H1 (cell line): ENCODE measurements at regions of chr7 and their contacts with region 1.

Region 1: DNA sequence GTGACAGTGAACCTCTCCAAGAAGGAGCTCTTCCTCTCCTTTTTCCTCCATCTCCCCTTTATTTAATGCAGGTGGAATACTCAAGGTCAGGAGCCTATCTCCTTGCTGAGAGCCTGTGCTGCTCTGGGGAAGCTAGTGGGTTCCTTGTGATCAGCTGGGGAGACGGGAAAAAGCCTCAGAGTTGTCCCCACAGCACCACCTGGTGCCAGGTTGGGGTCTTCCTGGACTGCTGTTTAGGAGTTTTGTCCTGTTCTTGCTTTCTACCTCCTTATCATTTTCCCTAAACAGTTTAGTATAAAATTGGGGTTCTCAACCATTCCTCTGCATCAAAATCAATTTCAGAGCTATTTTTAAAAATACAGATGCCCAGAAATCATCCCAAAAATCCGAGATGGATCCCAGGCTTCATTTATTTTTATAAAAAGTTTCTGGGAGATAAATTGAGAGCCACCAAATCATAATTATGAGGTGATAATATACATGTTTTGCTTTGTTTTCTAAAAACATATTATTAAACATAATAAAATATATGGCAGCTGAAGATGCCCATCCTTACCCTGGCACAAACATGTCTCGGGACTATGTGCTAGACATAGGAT is 44.3 kb downstream of the MACC1 start:
- DNase-seq: peak; percentile 60 to 84
- H3K4me3 ChIP-seq: no peak overlapping the region
- H3K27ac ChIP-seq: no peak overlapping the region
- H3K4me1 ChIP-seq: no peaks in the 10 kb centered on the region
- H3K27me3 ChIP-seq: no peaks in the 10 kb centered on the region
- CTCF ChIP-seq: peak; percentile 80 to 87 (median 83)
- EP300 ChIP-seq: no peak
- POLR2A ChIP-seq: no peak
- RAD21 ChIP-seq: peak; percentile 94

Region 2: DNA sequence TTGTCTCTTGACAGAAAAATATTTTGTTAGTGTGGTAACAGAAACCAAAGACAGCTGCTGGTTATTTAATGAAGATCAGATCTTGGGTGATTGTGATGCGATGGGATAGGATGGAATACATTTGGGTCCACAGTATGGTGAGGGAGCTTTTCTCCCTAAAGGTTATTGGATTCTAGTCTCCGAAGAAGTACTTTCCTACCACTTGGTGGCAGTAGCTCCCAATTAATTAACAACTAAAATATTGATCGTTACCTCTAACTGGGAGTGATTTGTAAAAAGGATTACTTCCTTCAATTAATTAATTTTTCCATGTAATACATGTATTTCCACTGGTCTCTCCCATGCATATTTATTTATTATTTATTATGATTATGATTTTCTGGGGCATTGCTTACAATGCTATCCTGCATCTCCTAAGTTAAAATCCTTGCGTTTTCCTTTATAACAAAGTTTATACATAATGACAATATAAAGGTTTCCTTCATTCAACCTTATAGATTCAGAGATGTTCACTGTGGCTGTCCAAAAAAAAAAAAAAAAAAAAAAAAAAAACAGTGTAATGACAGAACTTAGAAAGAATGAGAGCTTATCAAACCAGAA is 425.0 kb before region 1 on chr7:
- CTCF ChIA-PET with region 1: interaction called, 45 read pairs
- POLR2A ChIA-PET with region 1: no interaction called
- DNase-seq: no peak
- H3K4me3 ChIP-seq: no peak overlapping the region
- H3K27ac ChIP-seq: no peak overlapping the region
- H3K4me1 ChIP-seq: no peaks in the 10 kb centered on the region
- H3K27me3 ChIP-seq: no peaks in the 10 kb centered on the region
- CTCF ChIP-seq: peak in 2 of 3 experiments; percentile 45 to 61; a peak in 2 of 4 replicates
- EP300 ChIP-seq: no peak
- POLR2A ChIP-seq: no peak
- RAD21 ChIP-seq: peak; percentile 74 to 77

Region 3: DNA sequence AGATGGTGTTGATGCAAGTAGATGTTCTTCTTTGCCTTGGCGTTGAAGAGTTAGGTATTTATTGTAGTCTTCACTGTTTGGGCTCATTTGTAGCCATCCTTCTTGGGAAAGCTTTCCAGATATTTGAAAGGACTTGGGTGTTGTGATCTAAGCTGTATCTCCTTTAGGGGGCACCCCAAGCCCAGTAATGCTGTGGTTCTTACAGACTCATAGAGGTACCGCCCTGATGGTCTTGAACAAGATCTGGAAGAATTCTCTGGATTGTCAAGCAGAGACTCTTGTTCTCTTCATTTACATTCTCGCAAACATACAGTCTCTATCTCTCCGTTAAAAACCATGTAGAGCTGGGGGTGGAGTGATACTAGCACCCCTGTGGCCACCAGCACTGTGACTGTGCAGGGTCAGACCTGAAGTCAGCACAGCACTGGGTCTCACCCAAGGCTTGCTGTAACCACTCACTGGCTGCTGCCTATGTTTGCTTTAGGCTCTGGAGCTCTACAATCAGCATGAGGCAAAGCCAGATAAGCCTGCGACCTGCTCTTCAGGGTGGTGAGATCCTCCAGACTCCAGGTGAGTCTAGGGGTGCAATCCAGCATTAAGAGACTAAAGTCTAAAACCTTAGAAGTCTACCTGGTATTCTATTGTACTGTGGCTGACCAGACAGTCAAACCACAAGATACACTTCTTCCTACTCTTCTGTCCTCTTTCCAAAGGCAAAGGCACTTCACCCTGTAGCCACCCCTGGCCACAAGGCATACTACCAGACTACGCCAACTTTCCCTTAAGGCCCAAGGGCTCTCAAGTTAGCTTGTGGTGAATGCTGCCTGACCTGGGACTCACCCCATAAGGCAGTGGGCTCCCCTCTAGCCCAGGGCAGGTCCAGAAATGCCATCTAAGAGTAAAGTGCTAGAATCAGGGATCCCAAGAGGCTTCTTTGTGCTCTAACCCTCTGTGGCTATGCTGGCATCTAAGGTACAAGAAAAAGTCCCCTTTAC is 189.7 kb before region 1 on chr7:
- CTCF ChIA-PET with region 1: interaction called, 102 read pairs
- POLR2A ChIA-PET with region 1: interaction called, 3 read pairs
- DNase-seq: peak in 1 of 2 experiments; percentile 65
- H3K4me3 ChIP-seq: no peak overlapping the region
- H3K27ac ChIP-seq: no peak overlapping the region
- H3K4me1 ChIP-seq: peaks cover 0 to 8% (median 3%) of the 10 kb centered on the region in 4 experiments; a peak in 1 of 7 replicates
- H3K27me3 ChIP-seq: no peaks in the 10 kb centered on the region
- CTCF ChIP-seq: peak in 2 of 3 experiments; percentile 58 to 71; a peak in 3 of 4 replicates
- EP300 ChIP-seq: no peak
- POLR2A ChIP-seq: peak in 1 of 2 experiments; percentile 33; a peak in 1 of 3 replicates
- RAD21 ChIP-seq: peak; percentile 87 to 90

Region 4: DNA sequence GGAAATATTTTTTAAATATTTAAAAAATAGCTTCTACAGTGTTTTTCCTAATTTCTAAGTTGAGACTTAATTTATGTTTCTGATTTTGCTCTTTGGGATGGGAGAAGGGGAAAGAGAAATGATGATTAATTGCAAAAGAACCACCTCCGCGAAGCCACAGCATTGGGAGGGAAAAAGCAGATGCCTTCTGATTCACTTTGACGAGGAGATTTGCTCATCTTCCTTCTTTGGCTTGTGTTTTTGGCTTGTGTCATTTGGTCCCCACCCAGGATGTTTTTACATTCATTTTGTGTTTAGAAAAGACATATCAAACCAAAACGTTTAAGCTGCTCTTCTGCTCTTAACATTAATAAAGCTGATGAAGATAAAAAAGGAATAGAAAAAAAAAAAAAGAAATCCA is 77.4 kb before region 1 on chr7:
- CTCF ChIA-PET with region 1: no interaction called
- POLR2A ChIA-PET with region 1: no interaction called
- DNase-seq: no peak
- H3K4me3 ChIP-seq: no peak overlapping the region
- H3K27ac ChIP-seq: no peak overlapping the region
- H3K4me1 ChIP-seq: peaks cover 0 to 13% (median under 1%) of the 10 kb centered on the region in 4 experiments; a peak in 4 of 7 replicates
- H3K27me3 ChIP-seq: no peaks in the 10 kb centered on the region
- CTCF ChIP-seq: no peak
- EP300 ChIP-seq: no peak
- POLR2A ChIP-seq: no peak
- RAD21 ChIP-seq: no peak

Region 5: DNA sequence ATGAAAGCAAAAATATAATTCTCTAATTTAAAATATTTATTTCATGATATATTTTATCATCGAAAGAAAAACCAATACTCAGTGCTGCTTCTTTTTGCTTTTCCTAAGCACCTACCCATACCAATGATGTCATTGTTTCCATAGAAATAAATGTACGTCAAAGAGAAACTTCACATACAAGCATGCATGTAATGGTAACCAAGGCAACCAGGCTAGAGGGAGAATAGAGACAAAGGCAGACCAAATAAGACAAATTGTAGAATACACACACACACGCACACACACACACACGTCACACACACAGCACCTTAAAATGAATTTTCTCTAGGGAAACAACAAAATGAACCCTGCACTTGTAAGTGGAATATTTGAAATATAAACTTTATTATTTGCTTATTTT is 31.2 kb before region 1 on chr7:
- CTCF ChIA-PET with region 1: interaction called, 10 read pairs
- POLR2A ChIA-PET with region 1: no interaction called
- DNase-seq: no peak
- H3K4me3 ChIP-seq: no peak overlapping the region
- H3K27ac ChIP-seq: no peak overlapping the region
- H3K4me1 ChIP-seq: peaks cover 0 to 3% (median 0%) of the 10 kb centered on the region in 4 experiments; a peak in 1 of 7 replicates
- H3K27me3 ChIP-seq: no peaks in the 10 kb centered on the region
- CTCF ChIP-seq: no peak
- EP300 ChIP-seq: no peak
- POLR2A ChIP-seq: no peak
- RAD21 ChIP-seq: no peak

Region 6: GRCh38 chr7:20730611-20731010 is 557.8 kb after region 1 on chr7:
- CTCF ChIA-PET with region 1: no interaction called
- POLR2A ChIA-PET with region 1: no interaction called
- DNase-seq: no peak
- H3K4me3 ChIP-seq: no peak overlapping the region
- H3K27ac ChIP-seq: no peak overlapping the region
- H3K4me1 ChIP-seq: no peaks in the 10 kb centered on the region
- H3K27me3 ChIP-seq: no peaks in the 10 kb centered on the region
- CTCF ChIP-seq: no peak
- EP300 ChIP-seq: no peak
- POLR2A ChIP-seq: no peak
- RAD21 ChIP-seq: no peak